Posterior vena cava (tissue), 2 donors: ENCODE measurements at regions of chr11 and their contacts with region 1.

Region 1: DNA sequence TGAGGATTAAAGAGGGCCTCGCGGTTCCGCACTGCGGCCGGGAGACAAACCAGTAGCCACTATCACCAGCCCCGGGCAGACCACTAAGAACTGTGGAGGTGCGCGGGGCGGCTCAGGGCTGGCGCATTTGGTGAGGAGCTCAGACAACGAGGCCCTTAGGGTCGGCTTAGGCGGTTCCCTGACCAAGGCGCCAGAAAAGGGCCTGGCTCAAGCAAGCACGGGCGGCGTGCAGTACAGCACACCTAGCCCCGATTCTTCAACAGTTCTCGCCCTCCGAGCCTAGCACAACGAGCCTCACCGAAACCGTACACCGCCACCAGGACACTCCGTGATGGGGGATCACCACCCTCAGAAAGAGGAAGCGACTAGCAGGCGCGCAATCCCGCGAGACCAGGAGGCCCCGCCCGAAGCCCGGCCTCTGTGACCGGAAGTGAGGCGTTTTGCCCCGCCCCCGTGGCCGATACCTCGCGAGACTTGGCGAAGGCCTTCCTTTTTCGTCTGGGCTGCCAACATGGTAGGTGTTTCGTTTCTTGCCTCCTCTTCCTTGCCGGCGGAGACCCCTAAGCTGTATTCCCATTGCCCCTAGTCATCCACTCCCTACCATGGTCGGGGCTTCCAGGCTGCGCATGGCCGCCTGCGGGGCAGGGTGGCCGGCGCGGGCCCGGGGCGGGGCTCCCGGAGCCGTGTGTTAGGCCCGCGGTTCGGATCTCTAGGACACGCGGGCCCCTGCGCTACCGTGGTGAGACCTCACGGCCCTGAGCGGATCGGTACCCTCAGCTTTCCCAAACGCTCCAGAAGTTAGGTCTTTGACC is at the starts of genes RPL27A and TRIM66:
- DNase-seq: peak; percentile 100
- total RNA-seq, gene RPL27A: 610 to 698 TPM
- total RNA-seq, gene TRIM66: 5.9 to 13.4 TPM

Region 2: DNA sequence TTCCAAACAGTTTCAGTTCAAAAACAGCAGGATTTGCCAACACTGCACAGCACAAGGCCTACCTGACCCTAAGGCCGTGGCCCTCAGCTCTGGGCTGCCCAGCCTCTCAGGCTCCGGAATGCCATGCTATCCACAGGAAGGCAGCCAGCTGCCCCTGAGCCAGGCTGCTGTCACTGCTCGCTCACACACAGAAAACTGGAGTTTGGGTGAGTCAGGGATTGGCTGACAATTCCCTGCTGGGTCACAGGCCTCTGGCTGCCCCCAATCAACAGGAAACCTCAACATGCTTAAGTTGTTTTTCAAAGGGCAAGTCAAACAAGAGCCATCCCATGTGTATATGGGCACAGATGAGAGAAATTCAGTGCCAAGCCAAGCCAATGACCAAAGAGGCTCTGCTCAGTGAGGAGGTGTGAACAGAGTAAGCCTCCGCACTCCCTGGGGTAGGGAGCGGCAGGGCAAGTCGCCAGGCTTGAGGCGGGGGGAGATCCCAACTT is 50.3 kb after region 1 on chr11:
- intact Hi-C with region 1: no loop called
- DNase-seq: peak; percentile 89

Region 3: GRCh38 chr11:8744423-8744822 is 61.9 kb after region 1 on chr11:
- intact Hi-C with region 1: no loop called
- DNase-seq: no peak

Region 4: GRCh38 chr11:8807544-8808225 is 125.2 kb after region 1 on chr11:
- intact Hi-C with region 1: loop called in 1 of 2 experiments (anchors 5 kb)
- DNase-seq: no peak